ENCODE measurements at regions of chr11 and their contacts with region 1.

Region 1: GRCh38 chr11:123511037-123511870 is 81.2 kb downstream of the GRAMD1B start:
- H3K4me3 Mint-ChIP-seq: no peak overlapping the region
- H3K27ac Mint-ChIP-seq: no peak overlapping the region
- H3K4me1 Mint-ChIP-seq: peaks cover 7% of the 10 kb centered on the region
- H3K27me3 Mint-ChIP-seq: no peaks in the 10 kb centered on the region

Region 2: DNA sequence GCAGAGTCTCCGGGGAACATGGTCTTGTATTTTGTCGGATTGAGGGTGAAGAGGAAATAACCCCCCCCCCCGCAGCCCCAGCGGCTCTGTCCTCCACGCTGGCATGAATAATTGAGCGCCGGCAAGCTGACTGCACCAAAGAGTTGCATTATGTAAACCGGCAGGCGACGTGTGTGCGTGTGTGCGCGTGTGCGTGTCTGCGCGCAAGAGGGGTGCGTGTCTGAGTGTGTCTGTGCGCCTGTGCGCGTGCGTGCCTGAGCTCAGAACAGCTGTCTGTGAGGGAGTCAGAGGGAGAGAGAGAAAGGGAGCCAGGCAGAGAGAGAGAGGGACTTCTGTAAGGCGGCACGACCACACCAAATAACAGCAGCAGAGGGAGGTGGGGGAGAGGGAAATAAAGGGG is 48.8 kb after region 1 on chr11:
- intact Hi-C with region 1: loop called (anchors 1 kb)
- H3K4me3 Mint-ChIP-seq: peak overlapping the region; percentile 73
- H3K27ac Mint-ChIP-seq: peak overlapping the region; percentile 25
- H3K4me1 Mint-ChIP-seq: peaks cover 33% of the 10 kb centered on the region
- H3K27me3 Mint-ChIP-seq: peaks cover 6% of the 10 kb centered on the region

Region 3: GRCh38 chr11:123577081-123577598 is 65.9 kb after region 1 on chr11:
- intact Hi-C with region 1: loop called (anchors 1 kb)
- H3K4me3 Mint-ChIP-seq: peak overlapping the region; percentile 8
- H3K27ac Mint-ChIP-seq: no peak overlapping the region
- H3K4me1 Mint-ChIP-seq: peaks cover 26% of the 10 kb centered on the region
- H3K27me3 Mint-ChIP-seq: peaks cover 2% of the 10 kb centered on the region

Measured in dendritic cell treated with granulocyte-macrophage colony-stimulating factor and Interleukin-4, amounts not matched to agents 40 ng/mL and 50 ng/mL, for 4 days (primary cell).